GM10248 (cell line): ENCODE measurements at regions of chr6 and their contacts with region 1.

Region 1: GRCh38 chr6:41318654-41319565 is 16.5 kb upstream of the NCR2 start:
- DNase-seq: peak; percentile 85
- CTCF ChIP-seq: peak; percentile 100

Region 2: GRCh38 chr6:41092421-41093140 is 226.3 kb before region 1 on chr6:
- CTCF ChIA-PET with region 1: interaction called, 16 read pairs
- POLR2A ChIA-PET with region 1: no interaction called
- DNase-seq: peak; percentile 24
- CTCF ChIP-seq: peak; percentile 37

Region 3: DNA sequence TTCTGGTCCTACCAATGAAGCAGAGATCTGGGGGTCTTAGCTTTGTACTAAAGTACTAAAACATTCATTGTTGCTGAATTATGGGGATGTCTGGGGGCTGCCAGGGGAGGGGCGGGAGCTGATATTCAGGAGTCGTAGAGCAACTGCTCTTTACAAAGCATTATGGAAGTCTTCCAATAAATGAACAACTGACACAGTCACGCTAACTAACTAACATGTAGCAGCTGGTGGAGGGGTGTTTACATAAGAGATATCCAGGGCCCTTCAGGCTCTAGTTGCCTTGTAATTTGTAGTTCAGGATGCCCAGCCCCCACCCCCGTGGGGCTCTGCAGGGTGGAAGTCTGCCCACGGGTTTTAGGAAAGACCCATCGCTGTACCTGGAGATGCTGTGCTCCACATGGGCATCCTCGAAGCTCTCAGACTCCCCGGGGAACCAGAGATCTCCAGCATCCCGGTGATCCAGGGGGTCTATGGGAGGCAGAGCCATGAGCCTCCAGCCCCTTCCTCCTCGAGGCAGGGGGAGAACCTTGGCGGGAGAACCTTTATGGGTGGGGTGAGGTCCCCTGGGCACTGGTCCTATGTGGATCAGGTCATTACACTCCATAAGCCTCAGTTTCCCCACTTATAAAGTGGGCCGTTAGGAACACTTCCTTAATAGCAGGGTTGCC is 159.4 kb before region 1 on chr6:
- CTCF ChIA-PET with region 1: no interaction called
- POLR2A ChIA-PET with region 1: no interaction called
- DNase-seq: no peak
- CTCF ChIP-seq: no peak

Region 4: DNA sequence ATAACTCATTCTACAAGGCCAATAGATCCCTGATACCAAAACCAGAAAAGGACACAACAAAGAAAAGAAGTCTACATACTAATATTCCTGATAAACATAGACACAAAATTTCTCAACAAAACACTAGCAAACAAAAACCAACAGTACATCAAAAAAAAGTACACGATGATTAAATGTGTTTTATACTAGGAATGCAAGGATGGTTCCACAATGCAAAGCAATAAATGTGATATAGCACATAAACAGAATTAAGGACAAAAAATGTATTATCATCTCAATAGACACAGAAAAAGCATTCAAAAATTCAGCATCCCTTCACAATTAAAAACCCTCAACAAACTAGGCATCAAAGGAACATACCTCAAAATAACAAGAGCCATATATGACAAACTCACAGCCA is 55.6 kb before region 1 on chr6:
- CTCF ChIA-PET with region 1: no interaction called
- POLR2A ChIA-PET with region 1: no interaction called
- DNase-seq: no peak
- CTCF ChIP-seq: no peak

Region 5: DNA sequence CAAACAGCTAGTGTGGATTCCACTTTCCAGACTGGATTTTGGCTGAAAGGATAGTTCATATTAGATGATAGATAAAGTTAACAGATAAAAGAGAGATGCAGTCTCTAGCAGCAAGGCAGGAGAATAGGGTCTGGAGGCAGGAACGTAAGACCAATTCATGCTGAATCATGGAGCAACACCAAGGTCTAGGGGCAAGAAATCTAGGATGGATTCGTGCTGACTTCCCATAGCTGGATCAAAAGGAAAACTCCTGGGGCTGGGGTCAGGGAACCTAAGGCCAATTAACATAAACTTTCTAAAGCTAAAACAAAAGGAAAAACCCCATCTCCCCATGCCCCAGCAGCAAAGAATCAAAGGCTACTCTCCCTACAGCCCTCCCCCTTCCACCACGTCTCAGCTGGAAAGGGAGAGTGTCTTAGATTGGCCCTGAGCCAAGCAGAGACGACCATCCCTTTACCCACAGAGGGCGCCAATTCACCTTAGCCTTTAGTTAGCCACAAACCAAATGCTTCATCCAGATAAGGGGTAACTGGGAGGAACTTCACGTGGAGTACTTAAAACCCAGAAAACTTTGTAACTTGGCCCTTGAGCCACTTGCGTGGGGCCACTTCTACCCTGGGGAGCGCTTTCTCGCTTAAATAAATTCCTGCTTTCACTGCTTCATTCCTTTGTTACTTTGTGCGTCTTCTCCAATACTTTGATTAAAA is 40.1 kb before region 1 on chr6:
- CTCF ChIA-PET with region 1: interaction called, 31 read pairs
- POLR2A ChIA-PET with region 1: no interaction called
- DNase-seq: peak; percentile 55
- CTCF ChIP-seq: peak; percentile 54

Region 6: GRCh38 chr6:41286544-41287346 is 32.2 kb before region 1 on chr6 and contains the start of gene TREM1:
- CTCF ChIA-PET with region 1: interaction called, 17 read pairs
- POLR2A ChIA-PET with region 1: no interaction called
- DNase-seq: no peak
- CTCF ChIP-seq: no peak

Region 7: GRCh38 chr6:41306187-41306854 is 12.6 kb before region 1 on chr6:
- CTCF ChIA-PET with region 1: interaction called, 74 read pairs
- POLR2A ChIA-PET with region 1: no interaction called
- DNase-seq: peak; percentile 45
- CTCF ChIP-seq: peak; percentile 53

Region 8: GRCh38 chr6:41334482-41335040 is 15.7 kb after region 1 on chr6:
- CTCF ChIA-PET with region 1: interaction called, 123 read pairs
- POLR2A ChIA-PET with region 1: interaction called, 6 read pairs
- DNase-seq: no peak
- CTCF ChIP-seq: peak; percentile 25